ENCODE measurements at regions of chr1 and their contacts with region 1.

Region 1: DNA sequence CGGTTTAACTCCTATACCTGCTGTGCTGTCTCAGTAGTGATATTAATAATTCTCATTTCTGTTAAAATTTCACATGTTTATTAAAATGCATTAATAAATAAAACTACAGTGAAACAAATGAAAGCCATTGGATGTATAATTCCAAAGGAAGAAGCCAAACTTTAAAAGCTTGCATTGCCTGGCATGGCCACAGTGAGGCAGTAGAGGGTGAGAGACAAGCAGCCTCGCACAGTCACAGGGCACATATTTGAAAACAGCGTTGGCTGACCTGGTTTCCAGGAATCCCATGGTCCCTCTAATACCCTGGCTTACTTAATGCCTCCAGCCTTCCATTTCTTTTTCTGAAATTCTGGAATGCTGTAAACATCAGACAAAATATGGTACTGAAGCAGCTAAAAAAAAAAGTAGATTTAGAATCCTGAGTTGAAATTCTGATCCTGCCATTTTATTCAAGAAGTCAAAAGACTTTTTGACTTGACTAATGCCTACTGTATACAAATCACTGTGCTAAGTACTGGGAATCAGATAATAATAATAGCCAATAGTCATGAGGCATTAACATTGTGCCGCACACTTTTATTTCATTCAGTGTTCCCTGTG is 6.7 kb upstream of the RNASEL start:
- DNase-seq: peak; percentile 70
- H3K4me3 Mint-ChIP-seq: no peak overlapping the region
- H3K27ac Mint-ChIP-seq: no peak overlapping the region
- H3K4me1 Mint-ChIP-seq: peaks cover 2% of the 10 kb centered on the region
- H3K27me3 Mint-ChIP-seq: peaks cover 23% of the 10 kb centered on the region

Region 2: DNA sequence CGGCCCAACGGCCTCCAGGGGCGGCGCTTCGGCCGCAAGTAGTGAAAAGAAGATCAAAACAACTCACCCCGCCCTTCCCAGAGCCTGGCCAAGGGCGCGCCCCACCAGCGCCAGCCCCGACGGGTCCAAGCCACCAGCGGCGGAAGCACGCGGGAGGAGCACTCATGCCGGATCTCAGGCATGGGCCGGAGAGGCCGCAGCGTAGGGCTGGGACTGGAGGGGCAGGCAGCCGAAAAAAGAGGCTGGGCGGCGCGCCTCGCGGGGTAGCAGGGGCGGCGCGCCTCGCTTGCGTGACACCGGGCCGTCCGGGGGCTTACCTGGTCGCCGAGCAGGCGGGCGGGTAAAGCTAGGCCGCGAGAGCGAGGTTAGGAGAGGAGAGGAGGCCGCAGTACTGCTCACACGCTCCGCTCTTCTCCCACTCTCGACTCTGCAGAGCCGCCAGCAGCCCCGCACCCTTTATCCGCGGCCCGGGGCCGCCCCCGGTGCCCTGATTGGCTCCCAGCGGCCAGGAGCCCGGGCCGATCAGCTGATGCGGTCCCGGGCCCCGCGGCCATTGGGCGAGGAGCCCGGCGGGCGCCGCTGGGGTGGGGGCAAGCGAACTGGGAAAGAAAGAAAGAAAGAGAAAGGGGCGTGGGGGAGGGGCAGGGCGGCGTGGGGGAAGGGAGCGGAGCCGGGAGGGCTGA is 204.2 kb before region 1 on chr1 and contains the start of gene GLUL:
- CTCF ChIA-PET with region 1: no interaction called
- POLR2A ChIA-PET with region 1: no interaction called
- DNase-seq: peak; percentile 76
- H3K4me3 Mint-ChIP-seq: peak within 1 kb of the TSS; percentile 90
- H3K27ac Mint-ChIP-seq: peak within 1 kb of the TSS; percentile 95
- H3K4me1 Mint-ChIP-seq: peaks cover 50% of the 10 kb centered on the region
- H3K27me3 Mint-ChIP-seq: peaks cover 20% of the 10 kb centered on the region
- total RNA-seq, gene GLUL: 140 to 146 TPM

Region 3: GRCh38 chr1:182565537-182565936 is 30.2 kb before region 1 on chr1:
- CTCF ChIA-PET with region 1: no interaction called
- POLR2A ChIA-PET with region 1: no interaction called
- DNase-seq: no peak
- H3K4me3 Mint-ChIP-seq: no peak overlapping the region
- H3K27ac Mint-ChIP-seq: no peak overlapping the region
- H3K4me1 Mint-ChIP-seq: no peaks in the 10 kb centered on the region
- H3K27me3 Mint-ChIP-seq: peaks cover 10% of the 10 kb centered on the region

Region 4: DNA sequence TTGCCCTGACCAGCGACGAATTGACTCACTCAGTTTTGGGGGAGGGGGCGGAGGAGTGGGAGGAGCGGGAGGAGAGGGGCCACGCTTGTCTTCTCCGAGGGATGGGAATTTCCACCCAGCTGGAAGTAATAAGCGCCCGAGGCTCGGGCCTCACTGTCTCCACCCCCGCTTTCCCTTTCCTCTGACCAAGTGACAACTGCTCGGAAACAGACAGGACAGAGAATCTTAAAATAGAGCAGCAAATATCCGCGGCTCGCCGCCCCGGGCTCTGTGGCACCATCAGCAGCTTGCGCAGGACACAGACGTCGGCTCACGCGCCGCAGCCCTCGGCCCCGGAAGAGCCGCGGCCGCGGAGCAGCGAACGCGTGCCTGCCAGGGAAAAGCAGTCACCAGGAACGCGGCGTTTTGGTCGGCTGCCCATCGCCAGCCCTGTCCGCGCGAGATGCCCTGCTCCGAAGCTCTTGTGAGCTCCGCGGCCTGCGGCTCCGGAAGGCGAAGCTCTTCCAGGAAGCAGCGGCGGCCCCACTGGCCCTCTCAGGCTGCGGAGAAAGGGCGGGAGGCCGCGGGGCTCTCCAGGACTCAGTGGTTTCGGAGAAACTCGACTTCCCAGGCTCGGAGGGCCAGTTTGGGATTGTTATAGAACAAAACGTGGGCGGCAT is 19.2 kb after region 1 on chr1:
- CTCF ChIA-PET with region 1: interaction called, 11 read pairs
- POLR2A ChIA-PET with region 1: no interaction called
- DNase-seq: peak; percentile 16
- H3K4me3 Mint-ChIP-seq: peak overlapping the region; percentile 57
- H3K27ac Mint-ChIP-seq: no peak overlapping the region
- H3K4me1 Mint-ChIP-seq: peaks cover 40% of the 10 kb centered on the region
- H3K27me3 Mint-ChIP-seq: peaks cover 82% of the 10 kb centered on the region

Measured in activated CD4-positive, alpha-beta T cell treated with anti-CD3 and anti-CD28 coated beads, Interleukin-2, amount 10 ng/mL, durations not matched to agents 7 days and 5 days (primary cell).